GM12878 (cell line): ENCODE measurements at regions of chr5 and their contacts with region 1.

Region 1: DNA sequence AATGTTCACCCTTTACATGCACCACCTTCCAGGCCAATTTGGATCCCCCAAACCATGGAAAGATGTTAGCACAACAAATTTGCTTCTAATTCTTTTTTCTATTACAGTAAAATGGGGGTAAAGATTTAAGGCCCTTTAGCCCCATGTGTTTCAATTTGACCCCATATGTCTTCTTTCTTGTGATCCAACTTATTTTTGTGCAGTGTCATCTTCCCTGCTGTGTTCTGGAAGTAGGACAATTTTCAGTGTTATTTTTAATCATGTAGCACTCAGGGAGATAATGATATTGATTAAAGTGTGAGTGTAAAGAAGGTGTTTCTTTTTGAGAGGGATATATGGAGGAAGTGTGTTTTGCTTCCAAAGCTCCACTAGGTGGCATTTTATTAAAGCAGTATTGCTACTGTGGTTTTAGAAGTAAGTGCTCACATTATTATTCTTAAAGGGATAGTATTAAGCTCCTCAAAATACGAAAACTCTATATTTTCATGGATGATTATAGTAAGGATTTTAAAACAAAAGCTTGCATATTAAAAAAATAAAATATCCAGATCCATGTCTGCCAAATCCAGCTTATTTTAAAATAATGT is 118.7 kb upstream of the ATP10B start:
- DNase-seq: no peak
- ATAC-seq: peak; percentile 61
- H3K4me3 ChIP-seq: no peak overlapping the region
- H3K27ac ChIP-seq: no peak overlapping the region
- H3K4me1 ChIP-seq: no peaks in the 10 kb centered on the region
- H3K27me3 ChIP-seq: no peaks in the 10 kb centered on the region
- CTCF ChIP-seq: peak; percentile 13 to 38 (median 34); a peak in 3 of 6 replicates
- EP300 ChIP-seq: no peak
- POLR2A ChIP-seq: no peak
- RAD21 ChIP-seq: peak; percentile 70

Region 2: GRCh38 chr5:160887777-160888176 is 82.9 kb before region 1 on chr5:
- CTCF ChIA-PET with region 1: no interaction called
- POLR2A ChIA-PET with region 1: no interaction called
- RAD21 ChIA-PET with region 1: no interaction called
- SMC1A ChIA-PET with region 1: no interaction called
- in situ Hi-C with region 1: no loop called
- intact Hi-C with region 1: no loop called
- DNase-seq: no peak
- ATAC-seq: no peak
- H3K4me3 ChIP-seq: no peak overlapping the region
- H3K27ac ChIP-seq: no peak overlapping the region
- H3K4me1 ChIP-seq: no peaks in the 10 kb centered on the region
- H3K27me3 ChIP-seq: no peaks in the 10 kb centered on the region; a peak in 1 of 4 replicates
- CTCF ChIP-seq: no peak
- EP300 ChIP-seq: no peak
- POLR2A ChIP-seq: no peak
- RAD21 ChIP-seq: no peak

Region 3: DNA sequence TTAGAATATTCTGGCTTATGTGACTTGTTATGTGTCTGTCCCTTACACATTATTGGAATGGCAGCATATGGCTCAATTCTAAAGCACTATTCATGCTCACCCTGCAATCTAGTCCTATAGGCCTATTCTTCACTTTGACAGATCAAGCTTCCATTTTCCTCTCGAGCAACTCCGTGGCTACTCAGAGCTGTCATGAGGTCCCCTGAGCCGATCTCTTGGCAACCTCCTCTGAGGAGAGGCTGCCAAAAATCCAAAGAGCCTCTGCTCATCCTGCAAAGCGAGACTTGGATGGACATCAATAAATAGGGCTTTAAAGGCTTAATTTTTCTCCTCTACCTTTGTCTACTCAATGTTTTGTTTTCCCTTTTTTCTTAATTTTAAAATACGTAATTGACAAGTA is 412.0 kb after region 1 on chr5:
- CTCF ChIA-PET with region 1: no interaction called
- POLR2A ChIA-PET with region 1: no interaction called
- RAD21 ChIA-PET with region 1: no interaction called
- SMC1A ChIA-PET with region 1: no interaction called
- in situ Hi-C with region 1: no loop called
- intact Hi-C with region 1: loop called (anchors 5 kb)
- DNase-seq: no peak
- ATAC-seq: no peak
- H3K4me3 ChIP-seq: no peak overlapping the region
- H3K27ac ChIP-seq: no peak overlapping the region
- H3K4me1 ChIP-seq: no peaks in the 10 kb centered on the region
- H3K27me3 ChIP-seq: no peaks in the 10 kb centered on the region
- CTCF ChIP-seq: no peak
- EP300 ChIP-seq: no peak
- POLR2A ChIP-seq: no peak
- RAD21 ChIP-seq: no peak